K562 (cell line): ENCODE measurements at regions of chr12 and their contacts with region 1.

Region 1: GRCh38 chr12:46430340-46430948 is 57.9 kb upstream of the SLC38A2 start:
- DNase-seq: peak; percentile 24 to 77 (median 47)
- ATAC-seq: peak; percentile 79
- H3K4me3 ChIP-seq: no peak overlapping the region
- H3K27ac ChIP-seq: peak overlapping the region; percentile 59
- H3K4me1 ChIP-seq: peaks cover 13 to 37% of the 10 kb centered on the region in 2 experiments
- H3K27me3 ChIP-seq: no peaks in the 10 kb centered on the region
- CTCF ChIP-seq: no peak
- EP300 ChIP-seq: peak; percentile 96
- POLR2A ChIP-seq: no peak
- RAD21 ChIP-seq: no peak; a peak in 2 of 4 replicates

Region 2: DNA sequence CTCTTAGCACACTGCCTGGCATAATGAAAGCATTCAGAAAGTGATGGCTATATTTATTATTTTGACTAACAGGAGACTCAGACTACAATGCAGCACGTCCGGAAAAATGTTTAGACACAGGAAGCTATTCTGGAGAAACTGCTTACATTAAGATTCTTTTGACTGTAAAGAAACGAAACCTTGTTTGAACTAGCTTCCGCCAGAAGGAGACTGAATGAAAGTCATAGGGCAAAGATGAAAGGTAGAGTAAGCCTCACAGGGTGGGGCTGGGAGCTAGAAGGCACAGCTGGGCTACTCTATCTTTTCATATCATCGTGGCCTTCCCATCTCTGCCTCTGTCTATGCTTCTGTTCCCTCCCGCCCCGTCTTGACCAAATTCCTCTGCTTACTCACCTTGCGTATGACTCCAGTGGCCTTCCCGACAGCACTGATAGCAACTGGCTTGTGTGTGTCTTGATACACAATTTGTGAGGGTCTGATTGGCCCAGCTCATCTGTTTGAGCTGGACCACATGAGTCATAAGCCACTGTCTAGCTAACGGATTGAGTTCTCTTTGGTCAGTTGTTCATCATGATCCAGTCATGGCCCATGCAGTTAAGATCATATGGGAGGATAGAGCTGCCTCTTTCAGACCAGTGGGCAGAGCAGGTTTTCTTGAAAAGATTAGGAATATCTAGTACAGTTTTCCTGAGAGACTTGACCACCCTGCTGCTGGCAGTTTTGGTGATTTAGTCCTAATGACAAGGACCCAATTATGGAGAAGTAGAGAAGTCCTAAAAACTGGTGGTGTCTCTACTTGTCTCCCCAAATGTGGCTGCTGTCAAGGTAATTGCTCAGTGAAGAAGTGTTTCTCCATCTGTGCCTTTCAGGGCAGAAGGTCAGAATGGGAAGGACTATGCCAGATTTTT is 93.7 kb after region 1 on chr12:
- CTCF ChIA-PET with region 1: no interaction called
- POLR2A ChIA-PET with region 1: no interaction called
- in situ Hi-C with region 1: no loop called
- intact Hi-C with region 1: no loop called
- DNase-seq: peak; percentile 29 to 86 (median 43)
- ATAC-seq: peak; percentile 83
- H3K4me3 ChIP-seq: no peak overlapping the region
- H3K27ac ChIP-seq: peak overlapping the region; percentile 49; the same call in 1 of the 3 replicates
- H3K4me1 ChIP-seq: peaks cover 0 to 22% of the 10 kb centered on the region in 2 experiments; a peak in 4 of 5 replicates
- H3K27me3 ChIP-seq: no peaks in the 10 kb centered on the region
- CTCF ChIP-seq: no peak
- EP300 ChIP-seq: peak; percentile 76; the same call in 1 of the 2 replicates
- POLR2A ChIP-seq: no peak
- RAD21 ChIP-seq: peak in 1 of 2 experiments; percentile 28; a peak in 1 of 4 replicates

Region 3: GRCh38 chr12:46556105-46556559 is 125.7 kb after region 1 on chr12:
- CTCF ChIA-PET with region 1: no interaction called
- POLR2A ChIA-PET with region 1: no interaction called
- in situ Hi-C with region 1: no loop called
- intact Hi-C with region 1: loop called (anchors 5 kb)
- DNase-seq: no peak
- ATAC-seq: no peak
- H3K4me3 ChIP-seq: no peak overlapping the region
- H3K27ac ChIP-seq: no peak overlapping the region
- H3K4me1 ChIP-seq: peaks cover 3 to 34% of the 10 kb centered on the region in 2 experiments; a peak in 4 of 5 replicates
- H3K27me3 ChIP-seq: no peaks in the 10 kb centered on the region
- CTCF ChIP-seq: no peak
- EP300 ChIP-seq: no peak
- POLR2A ChIP-seq: no peak
- RAD21 ChIP-seq: no peak

Region 4: GRCh38 chr12:46627686-46628085 is 197.2 kb after region 1 on chr12:
- CTCF ChIA-PET with region 1: no interaction called
- POLR2A ChIA-PET with region 1: no interaction called
- in situ Hi-C with region 1: no loop called
- intact Hi-C with region 1: no loop called
- DNase-seq: no peak
- ATAC-seq: no peak
- H3K4me3 ChIP-seq: no peak overlapping the region
- H3K27ac ChIP-seq: no peak overlapping the region
- H3K4me1 ChIP-seq: no peaks in the 10 kb centered on the region
- H3K27me3 ChIP-seq: no peaks in the 10 kb centered on the region
- CTCF ChIP-seq: no peak
- EP300 ChIP-seq: no peak
- POLR2A ChIP-seq: no peak
- RAD21 ChIP-seq: no peak

Region 5: GRCh38 chr12:46744283-46744682 is 313.8 kb after region 1 on chr12:
- CTCF ChIA-PET with region 1: no interaction called
- POLR2A ChIA-PET with region 1: no interaction called
- in situ Hi-C with region 1: no loop called
- intact Hi-C with region 1: no loop called
- DNase-seq: no peak
- ATAC-seq: no peak
- H3K4me3 ChIP-seq: no peak overlapping the region
- H3K27ac ChIP-seq: no peak overlapping the region
- H3K4me1 ChIP-seq: no peaks in the 10 kb centered on the region
- H3K27me3 ChIP-seq: no peaks in the 10 kb centered on the region
- CTCF ChIP-seq: no peak
- EP300 ChIP-seq: no peak
- POLR2A ChIP-seq: no peak
- RAD21 ChIP-seq: no peak